Endothelial cell of umbilical vein (primary cell): ENCODE measurements at regions of chr4 and their contacts with region 1.

Region 1: DNA sequence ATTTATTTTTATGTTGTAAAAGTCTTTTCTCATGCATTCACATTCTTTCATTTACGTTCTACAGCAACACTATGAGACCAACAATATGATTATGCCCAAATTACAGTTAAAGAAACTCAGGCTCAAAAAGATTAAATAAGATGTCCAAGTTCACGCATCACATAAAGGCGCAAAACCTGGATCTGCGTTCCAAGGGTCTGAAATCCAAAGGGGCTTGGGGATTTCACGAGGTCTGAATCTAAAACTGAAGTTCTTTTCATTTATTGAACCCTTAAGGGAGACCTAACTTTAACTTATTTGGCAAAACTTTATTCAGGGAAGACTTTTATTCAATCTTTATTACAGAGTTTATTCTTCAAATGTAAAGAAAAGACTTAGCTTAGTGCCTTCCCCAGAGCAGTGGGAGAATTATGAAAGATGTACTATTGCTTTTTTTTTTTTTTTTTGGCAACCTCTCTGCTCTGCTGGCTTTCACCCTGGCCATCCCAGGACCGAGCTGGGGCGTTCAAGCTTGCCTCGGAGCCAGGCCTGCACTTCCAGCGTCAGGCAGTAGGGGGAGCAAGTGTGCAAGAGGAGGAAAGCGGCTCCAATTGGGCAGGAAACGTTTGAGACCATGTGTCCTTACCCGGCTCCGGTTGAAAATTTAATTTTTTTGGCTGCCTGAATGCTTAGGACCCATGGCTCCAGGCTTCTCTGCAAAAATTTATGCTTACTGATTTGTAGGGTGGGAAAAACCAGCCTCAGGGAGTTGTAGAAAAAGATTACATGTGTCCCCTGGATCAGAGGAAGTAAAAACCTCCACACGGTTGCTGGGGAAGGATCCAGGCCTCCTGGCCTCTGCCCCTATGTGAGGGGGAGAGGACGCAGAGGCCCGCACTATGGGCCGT is 344.3 kb upstream of the KLF3 start:
- DNase-seq: peak; percentile 89
- H3K4me3 ChIP-seq: peak overlapping the region in 1 of 3 experiments; percentile 41
- H3K27ac ChIP-seq: peak overlapping the region; percentile 67
- H3K4me1 ChIP-seq: peaks cover 16% of the 10 kb centered on the region
- H3K27me3 ChIP-seq: no peaks in the 10 kb centered on the region
- CTCF ChIP-seq: peak; percentile 97 to 98
- POLR2A ChIP-seq: no peak

Region 2: GRCh38 chr4:38062088-38062893 is 257.4 kb before region 1 on chr4:
- CTCF ChIA-PET with region 1: interaction called, 4 read pairs
- POLR2A ChIA-PET with region 1: no interaction called
- dilution Hi-C with region 1: no loop called
- intact Hi-C with region 1: loop called (anchors 1 kb)
- DNase-seq: peak; percentile 82
- H3K4me3 ChIP-seq: peak overlapping the region in 2 of 3 experiments; percentile 8 to 64
- H3K27ac ChIP-seq: no peak overlapping the region
- H3K4me1 ChIP-seq: peaks cover 2% of the 10 kb centered on the region
- H3K27me3 ChIP-seq: no peaks in the 10 kb centered on the region
- CTCF ChIP-seq: peak; percentile 77 to 78
- POLR2A ChIP-seq: no peak

Region 3: DNA sequence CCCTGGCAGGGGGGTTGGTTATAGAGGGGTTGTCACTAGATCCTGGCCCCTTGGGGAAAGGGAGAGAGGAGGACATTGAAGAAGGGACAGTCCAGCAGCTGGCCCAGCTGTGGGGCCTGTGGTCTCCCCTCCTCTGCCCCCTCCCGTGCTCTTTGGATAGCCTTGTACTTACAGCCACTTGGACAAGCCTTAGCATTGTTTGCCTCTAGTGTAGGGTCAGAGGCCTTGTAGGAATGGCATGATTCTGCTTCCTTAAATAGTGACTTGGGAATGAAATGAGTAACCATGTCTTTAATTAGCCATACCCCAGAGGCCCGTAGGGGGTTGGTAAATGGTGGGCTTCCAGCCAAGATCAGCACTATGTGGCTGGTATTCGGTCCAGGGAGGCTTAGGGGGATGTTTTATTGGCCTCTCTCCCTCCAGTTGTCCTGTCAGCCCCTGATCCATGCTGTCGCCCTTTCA is 129.0 kb before region 1 on chr4:
- CTCF ChIA-PET with region 1: interaction called, 4 read pairs
- POLR2A ChIA-PET with region 1: no interaction called
- dilution Hi-C with region 1: no loop called
- intact Hi-C with region 1: loop called (anchors 1 kb)
- DNase-seq: peak; percentile 88
- H3K4me3 ChIP-seq: no peak overlapping the region
- H3K27ac ChIP-seq: peak overlapping the region; percentile 43
- H3K4me1 ChIP-seq: peaks cover 24% of the 10 kb centered on the region
- H3K27me3 ChIP-seq: peaks cover 5 to 11% of the 10 kb centered on the region in 2 experiments
- CTCF ChIP-seq: no peak
- POLR2A ChIP-seq: no peak

Region 4: DNA sequence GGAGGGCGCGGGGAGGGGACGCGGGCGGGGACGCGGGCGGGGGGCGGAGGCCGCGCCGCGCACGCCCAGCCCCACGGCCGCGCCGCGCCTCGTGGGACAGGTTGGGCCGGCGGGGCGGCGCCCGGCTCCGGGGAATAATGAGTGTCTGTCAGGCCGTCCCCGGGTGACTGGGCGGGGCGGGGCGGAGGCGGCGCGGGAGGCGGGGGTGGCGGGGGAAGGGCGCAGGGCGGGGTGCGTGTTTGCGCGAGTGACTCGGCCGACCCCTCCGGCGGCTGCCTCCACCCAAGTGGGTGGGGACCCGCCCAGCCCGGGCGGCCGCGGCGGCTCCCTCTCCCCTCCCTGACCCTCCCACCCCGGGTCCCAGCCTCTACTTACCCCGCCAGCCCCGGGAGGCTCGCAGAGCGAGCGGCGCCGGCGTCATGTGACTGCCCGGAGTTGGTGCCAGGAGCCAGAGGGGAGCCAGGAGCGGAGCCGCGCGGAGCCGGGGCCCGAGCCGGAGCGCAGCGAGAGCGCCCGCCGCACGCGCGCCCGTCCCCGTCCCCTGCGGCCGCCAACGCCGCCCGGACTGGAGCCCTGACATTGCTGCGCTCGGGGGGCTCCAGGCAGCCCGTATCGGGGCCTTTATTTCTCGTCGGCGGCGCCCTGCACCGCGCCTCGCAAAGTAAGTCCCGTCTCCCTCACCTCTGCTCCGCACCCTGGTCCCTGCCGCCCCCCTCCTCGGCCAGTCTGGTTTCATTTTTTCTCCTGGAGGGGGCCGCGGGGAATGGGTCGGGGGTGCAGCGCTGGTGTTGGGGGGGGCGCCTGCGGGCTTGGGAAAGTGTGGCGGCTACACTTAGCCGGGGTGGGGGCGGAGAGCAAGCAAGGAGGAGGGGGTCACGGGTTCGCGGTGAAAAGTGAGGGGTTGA is 344.4 kb after region 1 on chr4 and contains the start of gene KLF3:
- CTCF ChIA-PET with region 1: interaction called, 12 read pairs
- POLR2A ChIA-PET with region 1: interaction called, 5 read pairs
- dilution Hi-C with region 1: no loop called
- intact Hi-C with region 1: no loop called
- DNase-seq: peak; percentile 86
- H3K4me3 ChIP-seq: peak within 1 kb of the TSS; percentile 81 to 89 (median 88)
- H3K27ac ChIP-seq: peak within 1 kb of the TSS; percentile 99
- H3K4me1 ChIP-seq: peaks cover 28% of the 10 kb centered on the region
- H3K27me3 ChIP-seq: no peaks in the 10 kb centered on the region
- CTCF ChIP-seq: no peak
- POLR2A ChIP-seq: peak; percentile 56
- total RNA-seq, gene KLF3: 50.5 and 51.8 TPM in 2 replicates

Region 5: DNA sequence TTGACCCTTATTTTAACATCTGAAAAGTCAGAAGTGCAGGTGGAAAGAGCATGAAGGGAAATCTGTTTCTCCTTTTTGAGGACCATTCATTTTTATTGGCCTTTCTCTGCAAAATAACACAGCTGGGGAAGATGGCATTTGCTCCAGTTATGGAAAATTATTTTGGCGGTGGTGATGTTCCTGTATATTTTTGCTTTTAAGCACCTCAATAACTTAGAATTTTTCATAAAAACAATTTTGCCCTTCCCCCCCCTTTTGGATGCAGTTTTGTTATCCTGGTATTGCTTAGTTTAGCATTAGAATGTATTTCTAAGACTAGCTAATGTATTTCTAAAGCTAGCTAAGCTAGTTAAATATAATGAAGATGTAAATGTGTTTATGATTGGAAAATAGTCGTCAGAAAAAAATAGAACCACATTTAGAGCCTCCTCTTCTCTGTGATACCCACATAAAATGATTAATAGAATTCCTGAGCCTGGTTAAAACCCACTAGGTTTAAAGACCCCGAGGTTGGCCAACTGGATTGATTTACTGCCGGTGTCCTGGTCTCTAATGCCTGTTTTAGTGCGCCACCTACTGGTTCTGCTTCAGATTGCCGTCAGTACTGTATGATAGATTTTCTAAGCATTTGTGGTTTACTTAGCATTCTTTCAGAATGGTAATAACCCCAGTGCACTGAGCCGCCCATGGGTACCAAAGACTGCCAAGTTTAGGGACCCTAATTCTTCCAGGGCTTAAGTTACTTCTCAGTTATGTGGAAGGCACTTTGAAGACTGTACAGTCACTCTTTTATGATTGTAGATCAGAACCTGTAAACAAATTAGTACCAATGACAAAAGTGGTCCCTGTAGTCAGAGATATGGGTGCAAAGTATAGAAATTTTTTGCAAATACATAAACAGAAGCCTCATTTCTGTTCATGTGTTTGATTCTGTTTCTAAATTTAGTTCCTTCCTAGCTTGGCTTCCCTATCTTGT is 355.7 kb after region 1 on chr4:
- CTCF ChIA-PET with region 1: interaction called, 53 read pairs
- POLR2A ChIA-PET with region 1: no interaction called
- dilution Hi-C with region 1: no loop called
- intact Hi-C with region 1: loop called (anchors 1 kb)
- DNase-seq: peak; percentile 86
- H3K4me3 ChIP-seq: no peak overlapping the region
- H3K27ac ChIP-seq: no peak overlapping the region
- H3K4me1 ChIP-seq: peaks cover 64% of the 10 kb centered on the region
- H3K27me3 ChIP-seq: no peaks in the 10 kb centered on the region
- CTCF ChIP-seq: peak; percentile 75 to 88
- POLR2A ChIP-seq: no peak